Activated T-helper 1 cell treated with anti-CD3 and anti-CD28 coated beads, Interleukin-12 subunit alpha, Interleukin-12 subunit beta, Interleukin-2, Interleukin-4 antibody, amounts not matched to agents 30 ng/mL and 10 ng/mL and 1 ng/mL, durations not matched to agents 14 hours and 24 hours and 36 hours (primary cell): ENCODE measurements at regions of chr14 and their contacts with region 1.

Region 1: DNA sequence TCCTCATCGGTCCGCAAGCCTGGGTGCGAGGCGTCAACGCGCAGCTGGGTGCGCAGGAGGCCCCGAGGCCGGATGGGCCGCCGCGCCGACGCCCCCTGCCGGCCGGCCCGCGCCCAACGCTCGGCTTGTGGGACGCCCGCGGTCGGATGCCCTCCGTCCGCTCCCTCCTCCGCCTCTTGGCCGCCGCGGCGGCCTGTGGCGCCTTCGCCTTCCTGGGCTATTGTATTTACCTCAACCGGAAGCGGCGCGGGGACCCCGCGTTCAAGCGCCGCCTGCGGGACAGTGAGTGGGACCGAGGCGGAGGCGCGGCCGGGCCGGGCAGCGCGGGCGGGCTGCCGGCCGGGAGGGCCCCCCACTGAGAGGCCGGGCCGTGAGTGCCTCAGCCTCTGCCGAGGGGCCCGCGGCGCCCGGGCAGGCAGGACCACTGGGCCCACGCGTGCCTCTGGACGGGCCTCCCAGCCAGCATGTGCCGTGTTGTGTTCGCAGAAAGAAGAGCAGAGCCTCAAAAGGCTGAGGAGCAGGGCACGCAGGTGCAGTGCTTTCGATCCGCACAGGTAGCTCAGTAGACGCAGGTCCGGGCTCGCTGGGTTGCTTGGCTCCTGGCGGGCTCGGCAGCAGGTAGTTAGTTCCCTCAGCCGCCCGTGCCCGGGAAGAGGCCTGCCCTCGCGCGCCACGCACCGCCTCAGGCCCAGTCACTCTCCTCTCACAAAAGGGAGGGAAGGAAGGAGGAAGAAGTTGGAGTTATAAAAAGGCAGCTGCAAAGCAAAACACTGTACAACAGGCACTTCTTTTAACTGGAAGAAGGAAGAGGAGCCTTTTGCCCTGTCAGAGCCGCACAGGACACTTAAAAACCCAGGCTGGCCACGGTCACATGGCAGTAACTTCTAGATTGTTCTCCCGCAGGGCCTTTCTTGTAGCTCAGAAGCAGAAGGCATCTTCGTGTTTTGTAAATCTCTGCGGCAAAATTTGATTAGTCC is at the start of gene TOMM20L:
- DNase-seq: peak; percentile 66
- H3K4me3 Mint-ChIP-seq: peak within 1 kb of the TSS; percentile 67
- H3K27ac Mint-ChIP-seq: peak within 1 kb of the TSS; percentile 7
- H3K4me1 Mint-ChIP-seq: peaks cover 13% of the 10 kb centered on the region
- H3K27me3 Mint-ChIP-seq: peaks cover 6% of the 10 kb centered on the region
- total RNA-seq, gene TOMM20L: not detected in 2 replicates

Region 2: GRCh38 chr14:58331111-58331510 is 65.0 kb before region 1 on chr14:
- intact Hi-C with region 1: loop called (anchors 1 kb)
- DNase-seq: peak; percentile 84
- H3K4me3 Mint-ChIP-seq: peak overlapping the region; percentile 64
- H3K27ac Mint-ChIP-seq: peak overlapping the region; percentile 91
- H3K4me1 Mint-ChIP-seq: peaks cover 19% of the 10 kb centered on the region
- H3K27me3 Mint-ChIP-seq: no peaks in the 10 kb centered on the region

Region 3: GRCh38 chr14:58987591-58987990 is 591.5 kb after region 1 on chr14:
- intact Hi-C with region 1: no loop called
- DNase-seq: no peak
- H3K4me3 Mint-ChIP-seq: no peak overlapping the region
- H3K27ac Mint-ChIP-seq: no peak overlapping the region
- H3K4me1 Mint-ChIP-seq: no peaks in the 10 kb centered on the region
- H3K27me3 Mint-ChIP-seq: peaks cover 2% of the 10 kb centered on the region